ENCODE measurements at regions of chr3 and their contacts with region 1.

Region 1: DNA sequence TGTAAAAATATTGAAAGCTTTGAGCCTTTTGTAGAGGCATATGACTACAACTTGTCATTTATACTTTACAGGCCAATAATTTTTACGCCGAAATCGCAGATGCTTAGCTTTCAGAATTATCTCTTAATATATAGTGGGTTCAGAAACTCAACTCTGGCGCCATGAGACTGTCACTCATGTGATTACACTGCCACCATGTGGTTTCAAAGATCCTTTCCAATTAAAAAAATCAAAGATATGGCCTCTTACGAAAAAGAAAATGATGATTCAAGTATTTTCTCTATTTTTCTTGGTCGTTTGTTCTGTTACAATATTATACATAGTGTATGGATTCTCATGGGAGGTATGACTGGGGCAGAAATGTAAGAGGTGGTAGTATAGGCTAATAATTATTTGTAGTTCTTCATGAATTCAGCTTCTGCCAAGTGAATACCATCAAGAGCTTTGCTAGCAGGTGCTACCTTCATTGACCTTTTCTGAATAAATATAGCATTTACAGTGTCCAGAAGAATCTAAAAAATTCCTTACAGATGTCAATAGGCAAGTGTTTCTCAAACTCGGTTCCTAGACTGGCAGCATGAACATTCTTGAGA is 751.7 kb upstream of the GOLIM4 start:
- DNase-seq: peak in 2 of 4 experiments; percentile 4 to 15
- ATAC-seq: no peak
- H3K4me3 ChIP-seq: no peak overlapping the region
- H3K27ac ChIP-seq: no peak overlapping the region
- H3K4me1 ChIP-seq: no peaks in the 10 kb centered on the region
- H3K27me3 ChIP-seq: no peaks in the 10 kb centered on the region
- CTCF ChIP-seq: peak in 2 of 3 experiments; percentile 11 to 49; a peak in 4 of 6 replicates
- EP300 ChIP-seq: no peak
- POLR2A ChIP-seq: no peak
- RAD21 ChIP-seq: peak; percentile 60 to 65

Region 2: DNA sequence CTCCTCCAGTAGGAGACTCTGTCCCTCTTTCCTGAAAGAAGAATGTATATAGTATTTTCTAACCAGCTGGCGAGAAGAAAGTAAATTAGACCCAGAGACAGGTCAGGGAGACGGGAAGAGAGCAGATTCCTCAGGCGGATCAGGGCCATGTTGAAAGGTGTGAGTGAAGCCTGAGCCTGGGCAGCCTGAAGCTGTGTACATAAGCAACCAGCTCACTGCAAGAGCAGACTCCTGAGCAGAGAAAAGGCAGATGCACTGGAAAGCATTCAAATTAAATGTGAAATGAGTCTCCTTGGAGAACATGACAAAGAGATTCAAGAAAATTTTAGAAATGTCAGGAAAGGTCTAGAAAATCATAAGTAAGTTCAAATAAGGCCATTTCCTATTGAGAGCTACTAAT is 917.4 kb before region 1 on chr3:
- CTCF ChIA-PET with region 1: no interaction called
- POLR2A ChIA-PET with region 1: no interaction called
- in situ Hi-C with region 1: no loop called
- intact Hi-C with region 1: loop called (anchors 10 kb)
- DNase-seq: no peak
- ATAC-seq: no peak
- H3K4me3 ChIP-seq: no peak overlapping the region
- H3K27ac ChIP-seq: no peak overlapping the region
- H3K4me1 ChIP-seq: no peaks in the 10 kb centered on the region
- H3K27me3 ChIP-seq: no peaks in the 10 kb centered on the region
- CTCF ChIP-seq: no peak
- EP300 ChIP-seq: no peak
- POLR2A ChIP-seq: no peak
- RAD21 ChIP-seq: no peak

Region 3: DNA sequence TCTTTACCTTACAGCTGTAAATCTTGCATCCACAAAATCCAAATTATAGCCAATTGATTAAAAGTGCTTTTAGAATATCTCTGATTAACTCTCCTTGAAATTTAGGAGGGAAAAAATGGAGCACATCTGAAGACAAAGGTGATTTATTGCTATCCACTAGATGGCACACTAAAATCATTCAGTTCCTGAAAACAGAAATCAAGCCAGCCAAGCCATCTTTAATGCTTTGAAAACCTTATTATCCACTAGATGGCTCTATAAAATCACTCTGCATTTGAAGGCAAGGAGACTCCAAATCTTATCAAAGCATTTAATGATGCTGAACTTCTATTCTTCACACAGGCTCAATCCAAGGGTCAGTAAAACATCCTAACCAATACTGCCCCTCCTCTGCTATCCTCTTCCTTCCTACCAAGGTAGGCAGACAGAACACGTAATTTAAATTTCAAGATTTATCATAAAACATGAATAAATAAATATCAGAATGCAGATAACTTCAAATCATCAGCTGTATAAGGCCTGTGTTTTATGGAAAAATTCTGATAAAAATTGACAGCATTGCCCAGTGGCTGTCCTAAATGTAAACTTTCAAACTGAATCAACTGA is 800.1 kb before region 1 on chr3:
- CTCF ChIA-PET with region 1: interaction called, 4 read pairs
- POLR2A ChIA-PET with region 1: no interaction called
- in situ Hi-C with region 1: no loop called
- intact Hi-C with region 1: loop called (anchors 1 kb)
- DNase-seq: peak; percentile 34 to 77 (median 50)
- ATAC-seq: peak; percentile 91
- H3K4me3 ChIP-seq: no peak overlapping the region
- H3K27ac ChIP-seq: no peak overlapping the region
- H3K4me1 ChIP-seq: no peaks in the 10 kb centered on the region
- H3K27me3 ChIP-seq: no peaks in the 10 kb centered on the region
- CTCF ChIP-seq: peak; percentile 73 to 99 (median 95)
- EP300 ChIP-seq: no peak
- POLR2A ChIP-seq: no peak
- RAD21 ChIP-seq: peak; percentile 99

Region 4: GRCh38 chr3:168213920-168214319 is 633.5 kb before region 1 on chr3:
- CTCF ChIA-PET with region 1: interaction called, 10 read pairs
- POLR2A ChIA-PET with region 1: no interaction called
- in situ Hi-C with region 1: loop called (anchors 10 kb)
- intact Hi-C with region 1: loop called (anchors 1 kb)
- DNase-seq: no peak
- ATAC-seq: no peak; the same call in 2 of the 3 replicates
- H3K4me3 ChIP-seq: no peak overlapping the region
- H3K27ac ChIP-seq: no peak overlapping the region
- H3K4me1 ChIP-seq: no peaks in the 10 kb centered on the region
- H3K27me3 ChIP-seq: no peaks in the 10 kb centered on the region; a peak in 1 of 5 replicates
- CTCF ChIP-seq: no peak
- EP300 ChIP-seq: no peak
- POLR2A ChIP-seq: no peak
- RAD21 ChIP-seq: no peak

Region 5: GRCh38 chr3:168914662-168915061 is 67.3 kb after region 1 on chr3:
- CTCF ChIA-PET with region 1: no interaction called
- POLR2A ChIA-PET with region 1: no interaction called
- in situ Hi-C with region 1: no loop called
- intact Hi-C with region 1: no loop called
- DNase-seq: no peak
- ATAC-seq: no peak
- H3K4me3 ChIP-seq: no peak overlapping the region
- H3K27ac ChIP-seq: no peak overlapping the region
- H3K4me1 ChIP-seq: no peaks in the 10 kb centered on the region
- H3K27me3 ChIP-seq: no peaks in the 10 kb centered on the region
- CTCF ChIP-seq: no peak
- EP300 ChIP-seq: no peak
- POLR2A ChIP-seq: no peak
- RAD21 ChIP-seq: no peak

Measured in K562 (cell line).